ENCODE measurements at regions of chr14 and their contacts with region 1.

Region 1: DNA sequence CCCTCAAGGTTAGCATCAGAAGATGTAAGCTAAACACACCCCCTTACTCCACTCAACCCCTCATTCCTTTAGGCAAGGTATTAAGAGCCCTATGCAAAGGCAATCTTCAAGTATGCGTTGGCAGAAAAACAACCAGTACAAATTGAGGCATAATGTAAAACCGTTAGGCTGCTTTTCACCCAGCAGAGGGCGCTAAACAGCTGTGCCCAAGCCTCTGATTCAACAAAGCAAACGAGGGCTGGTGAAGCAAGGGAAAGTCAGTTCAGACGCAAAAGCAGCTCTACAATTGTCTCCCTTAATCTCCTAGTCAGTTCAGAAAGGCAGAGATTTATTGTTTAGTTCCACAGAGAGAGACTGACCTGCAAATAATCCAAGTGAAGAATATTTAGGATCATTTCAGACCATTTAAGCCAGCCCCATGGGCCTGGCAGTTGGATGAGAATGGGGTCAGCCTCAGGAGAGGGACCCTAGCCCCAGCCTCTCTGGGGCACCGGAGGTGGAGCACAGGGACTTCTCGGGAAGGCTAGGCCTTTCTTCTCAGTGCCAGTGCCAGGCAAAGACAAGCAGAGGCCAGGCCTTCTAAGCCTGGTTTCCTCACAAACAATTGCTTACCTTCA is 23.5 kb downstream of the DCAF5 start:
- DNase-seq: peak; percentile 46 to 88 (median 77)
- ATAC-seq: peak; percentile 90
- H3K4me3 ChIP-seq: no peak overlapping the region
- H3K4me3 Mint-ChIP-seq: no peak overlapping the region
- H3K27ac ChIP-seq: no peak overlapping the region
- H3K27ac Mint-ChIP-seq: peak overlapping the region; percentile 89
- H3K4me1 ChIP-seq: peaks cover 22% of the 10 kb centered on the region
- H3K4me1 Mint-ChIP-seq: peaks cover 79% of the 10 kb centered on the region
- H3K27me3 ChIP-seq: no peaks in the 10 kb centered on the region
- H3K27me3 Mint-ChIP-seq: no peaks in the 10 kb centered on the region
- CTCF ChIP-seq: peak; percentile 92

Region 2: GRCh38 chr14:68444449-68445168 is 684.8 kb before region 1 on chr14:
- CTCF ChIA-PET with region 1: no interaction called
- POLR2A ChIA-PET with region 1: no interaction called
- intact Hi-C with region 1: no loop called
- DNase-seq: no peak
- ATAC-seq: no peak
- H3K4me3 ChIP-seq: no peak overlapping the region
- H3K4me3 Mint-ChIP-seq: no peak overlapping the region
- H3K27ac ChIP-seq: no peak overlapping the region
- H3K27ac Mint-ChIP-seq: no peak overlapping the region
- H3K4me1 ChIP-seq: no peaks in the 10 kb centered on the region
- H3K4me1 Mint-ChIP-seq: peaks cover 7% of the 10 kb centered on the region
- H3K27me3 ChIP-seq: no peaks in the 10 kb centered on the region
- H3K27me3 Mint-ChIP-seq: no peaks in the 10 kb centered on the region
- CTCF ChIP-seq: no peak

Region 3: DNA sequence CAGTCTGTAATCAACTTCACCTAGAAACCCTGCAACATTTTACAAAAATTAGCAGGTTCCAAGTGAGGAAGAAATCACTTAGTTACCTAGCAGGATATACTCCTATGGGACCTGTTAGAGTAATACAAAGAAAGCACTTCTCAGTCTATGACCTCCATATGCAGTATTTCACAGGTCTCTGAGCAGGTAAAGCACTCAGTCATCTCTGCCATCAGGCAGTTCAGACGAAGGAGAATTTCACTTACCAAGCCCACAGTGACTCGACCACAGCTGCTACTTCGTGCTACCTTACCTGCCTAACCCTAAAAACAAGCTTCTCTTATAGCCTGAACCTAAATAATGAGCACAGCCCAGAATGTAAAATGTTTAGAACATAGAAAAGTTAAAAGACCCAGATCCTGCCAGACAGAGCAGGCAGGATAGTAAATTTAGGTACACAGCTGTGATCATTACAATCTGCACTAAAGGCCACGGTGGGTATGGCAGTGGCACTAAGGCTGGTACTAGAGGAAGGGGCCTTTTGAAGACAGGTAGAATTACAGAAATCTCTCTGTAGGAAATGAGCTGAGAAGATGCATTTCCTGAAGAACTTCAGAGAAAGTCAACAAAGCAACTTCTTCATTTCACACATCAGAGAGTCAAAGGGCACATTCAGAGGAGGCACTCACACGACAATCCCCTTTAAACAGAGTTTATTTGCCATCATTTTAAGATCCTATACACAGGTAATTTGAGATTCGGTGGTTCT is 12.2 kb before region 1 on chr14:
- CTCF ChIA-PET with region 1: interaction called, 10 read pairs
- POLR2A ChIA-PET with region 1: interaction called, 3 read pairs
- intact Hi-C with region 1: no loop called
- DNase-seq: peak in 1 of 9 experiments; percentile 45
- ATAC-seq: peak; percentile 81
- H3K4me3 ChIP-seq: no peak overlapping the region
- H3K4me3 Mint-ChIP-seq: peak overlapping the region; percentile 26
- H3K27ac ChIP-seq: peak overlapping the region in 1 of 2 experiments; percentile 14
- H3K27ac Mint-ChIP-seq: peak overlapping the region; percentile 62
- H3K4me1 ChIP-seq: peaks cover 26% of the 10 kb centered on the region
- H3K4me1 Mint-ChIP-seq: peaks cover 50% of the 10 kb centered on the region
- H3K27me3 ChIP-seq: no peaks in the 10 kb centered on the region
- H3K27me3 Mint-ChIP-seq: no peaks in the 10 kb centered on the region
- CTCF ChIP-seq: no peak

Region 4: DNA sequence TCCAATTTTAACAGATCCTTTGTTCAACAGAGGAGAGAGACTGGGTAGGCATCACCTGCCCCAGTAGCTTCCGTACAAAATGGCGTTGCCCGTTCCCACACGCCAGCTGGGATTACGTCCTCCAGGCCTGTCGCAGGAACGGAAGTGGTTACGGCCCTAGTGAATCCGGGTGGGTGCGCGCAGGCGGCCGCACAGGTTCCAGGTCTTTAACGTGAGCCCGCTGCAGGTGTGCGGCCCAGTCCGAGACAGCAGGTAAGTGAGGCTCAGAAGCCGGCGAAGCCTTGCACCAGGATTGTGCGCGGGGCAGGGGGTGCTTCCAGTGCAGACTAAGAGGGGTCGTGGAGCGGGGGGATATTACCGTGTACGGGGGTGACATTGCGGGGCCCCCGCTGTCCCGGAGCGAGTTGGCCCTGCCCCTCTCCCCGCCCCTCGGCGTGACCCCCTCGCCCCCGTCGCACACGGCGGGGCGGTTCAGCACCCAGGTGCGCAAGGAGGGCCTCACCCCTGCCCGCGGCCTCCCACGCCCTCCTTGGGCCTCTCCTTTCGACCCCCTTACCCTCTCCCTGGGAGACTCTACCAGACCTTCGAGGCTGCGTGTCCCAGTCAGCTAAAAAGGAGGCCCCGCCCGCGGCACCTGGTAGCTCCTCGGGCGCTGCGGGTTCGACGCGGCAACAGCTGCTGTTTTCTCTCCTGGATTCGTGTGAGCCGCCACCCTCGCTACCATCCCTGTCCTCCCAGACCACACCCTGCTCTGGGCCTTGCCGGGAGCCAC is 62.2 kb after region 1 on chr14 and contains the start of gene EXD2:
- CTCF ChIA-PET with region 1: interaction called, 12 read pairs
- POLR2A ChIA-PET with region 1: no interaction called
- intact Hi-C with region 1: loop called in 1 of 2 experiments (anchors 1 kb)
- DNase-seq: peak; percentile 36 to 87 (median 72)
- ATAC-seq: peak; percentile 79
- H3K4me3 ChIP-seq: peak within 1 kb of the TSS; percentile 72 to 91
- H3K4me3 Mint-ChIP-seq: peak within 1 kb of the TSS; percentile 95
- H3K27ac ChIP-seq: peak within 1 kb of the TSS; percentile 56 to 60
- H3K27ac Mint-ChIP-seq: peak within 1 kb of the TSS; percentile 97
- H3K4me1 ChIP-seq: peaks cover 7% of the 10 kb centered on the region
- H3K4me1 Mint-ChIP-seq: peaks cover 29% of the 10 kb centered on the region
- H3K27me3 ChIP-seq: no peaks in the 10 kb centered on the region
- H3K27me3 Mint-ChIP-seq: no peaks in the 10 kb centered on the region
- CTCF ChIP-seq: no peak
- total RNA-seq, gene EXD2: 5.9 to 7.9 TPM

Region 5: GRCh38 chr14:69235708-69236107 is 106.3 kb after region 1 on chr14:
- CTCF ChIA-PET with region 1: interaction called, 56 read pairs
- POLR2A ChIA-PET with region 1: interaction called, 3 read pairs
- intact Hi-C with region 1: no loop called
- DNase-seq: no peak
- ATAC-seq: no peak
- H3K4me3 ChIP-seq: no peak overlapping the region
- H3K4me3 Mint-ChIP-seq: no peak overlapping the region
- H3K27ac ChIP-seq: no peak overlapping the region
- H3K27ac Mint-ChIP-seq: no peak overlapping the region
- H3K4me1 ChIP-seq: no peaks in the 10 kb centered on the region
- H3K4me1 Mint-ChIP-seq: no peaks in the 10 kb centered on the region
- H3K27me3 ChIP-seq: no peaks in the 10 kb centered on the region
- H3K27me3 Mint-ChIP-seq: no peaks in the 10 kb centered on the region
- CTCF ChIP-seq: no peak

Region 6: DNA sequence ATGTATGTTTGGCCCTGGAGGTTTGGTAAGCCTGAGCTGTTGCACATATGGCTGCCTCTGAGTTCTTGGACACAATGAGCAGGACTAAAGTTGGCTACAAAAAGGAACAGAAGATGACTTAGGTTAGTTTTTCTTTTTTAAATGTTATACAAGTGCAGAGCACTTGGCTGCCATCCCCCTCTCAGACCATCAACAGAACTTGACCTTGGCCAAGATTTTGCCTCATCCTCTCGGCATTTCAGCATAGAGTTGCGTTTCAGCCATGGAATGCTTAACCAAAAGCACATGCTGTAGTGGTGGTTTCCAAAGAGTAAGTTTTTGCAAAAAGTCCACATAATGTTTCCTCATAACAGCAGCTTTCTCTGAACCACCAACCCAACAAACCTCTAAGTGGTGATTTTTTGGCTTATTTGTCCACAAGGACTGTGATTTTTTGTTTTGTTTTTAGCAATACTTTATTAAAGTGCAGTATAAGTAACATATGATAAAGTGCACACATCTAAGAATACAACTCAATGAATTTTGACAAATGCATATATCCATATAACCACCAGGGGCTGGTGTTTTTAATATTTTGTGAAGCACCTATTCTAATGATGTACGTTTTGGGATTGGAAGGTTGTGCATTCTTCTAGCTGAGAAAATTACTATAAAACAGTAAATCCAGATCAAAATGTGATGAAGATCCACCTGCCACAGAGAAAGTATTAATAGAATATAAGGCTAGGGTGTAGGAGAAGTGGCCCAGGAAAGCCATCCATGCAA is 118.5 kb after region 1 on chr14:
- CTCF ChIA-PET with region 1: interaction called, 56 read pairs
- POLR2A ChIA-PET with region 1: no interaction called
- intact Hi-C with region 1: no loop called
- DNase-seq: no peak
- ATAC-seq: no peak
- H3K4me3 ChIP-seq: no peak overlapping the region
- H3K4me3 Mint-ChIP-seq: no peak overlapping the region
- H3K27ac ChIP-seq: no peak overlapping the region
- H3K27ac Mint-ChIP-seq: no peak overlapping the region
- H3K4me1 ChIP-seq: no peaks in the 10 kb centered on the region
- H3K4me1 Mint-ChIP-seq: peaks cover under 1% of the 10 kb centered on the region
- H3K27me3 ChIP-seq: no peaks in the 10 kb centered on the region
- H3K27me3 Mint-ChIP-seq: peaks cover 6% of the 10 kb centered on the region
- CTCF ChIP-seq: no peak

Region 7: DNA sequence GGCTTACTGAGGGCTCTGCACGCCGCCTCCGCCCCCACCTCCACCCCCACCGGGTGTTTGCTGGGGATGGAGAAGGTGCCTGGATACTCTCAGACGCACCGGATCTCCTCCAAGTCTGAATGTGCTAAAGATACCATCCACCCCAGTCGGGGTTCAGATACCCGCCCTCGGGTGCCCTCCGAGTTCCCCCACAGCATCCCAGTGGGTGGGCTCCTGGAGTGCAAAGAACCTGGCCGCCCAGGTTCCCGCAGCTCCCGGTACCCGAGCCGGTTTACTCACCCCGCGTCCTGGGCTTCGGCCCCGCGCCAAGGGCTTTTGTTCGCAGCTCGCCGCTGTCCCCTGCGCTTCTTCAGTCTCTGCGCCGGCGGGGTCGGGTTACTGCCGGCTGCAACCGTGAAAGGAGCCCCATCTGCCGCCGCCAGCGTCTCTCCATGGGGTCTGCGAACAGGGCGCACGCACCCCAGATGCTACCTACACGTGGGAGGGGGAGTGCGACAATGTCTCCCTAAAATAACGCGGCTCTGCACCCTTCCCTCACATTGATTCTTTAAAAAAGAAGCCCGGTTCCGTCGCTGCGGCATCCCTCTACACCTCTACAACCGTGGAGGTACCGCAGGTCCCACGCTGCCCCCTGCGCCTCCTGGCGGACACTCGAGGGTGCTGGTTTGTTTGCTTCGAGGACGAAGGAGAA is 445.0 kb after region 1 on chr14 and contains the start of gene CCDC177:
- CTCF ChIA-PET with region 1: no interaction called
- POLR2A ChIA-PET with region 1: no interaction called
- intact Hi-C with region 1: loop called (anchors 1 to 10 kb)
- DNase-seq: peak; percentile 48 to 85 (median 74)
- ATAC-seq: peak; percentile 85
- H3K4me3 ChIP-seq: peak within 1 kb of the TSS; percentile 38 to 61
- H3K4me3 Mint-ChIP-seq: peak within 1 kb of the TSS; percentile 83
- H3K27ac ChIP-seq: no peak within 1 kb of the TSS
- H3K27ac Mint-ChIP-seq: no peak within 1 kb of the TSS
- H3K4me1 ChIP-seq: peaks cover 19% of the 10 kb centered on the region
- H3K4me1 Mint-ChIP-seq: peaks cover 12% of the 10 kb centered on the region
- H3K27me3 ChIP-seq: peaks cover 15 to 18% of the 10 kb centered on the region in 2 experiments
- H3K27me3 Mint-ChIP-seq: peaks cover 39% of the 10 kb centered on the region
- CTCF ChIP-seq: peak; percentile 96
- total RNA-seq, gene CCDC177: not detected

Measured in CD8-positive, alpha-beta T cell (primary cell).